ENCODE measurements at regions of chr1 and their contacts with region 1.

Region 1: GRCh38 chr1:161098210-161099068 is at the start of gene KLHDC9:
- DNase-seq: peak; percentile 53 to 98 (median 80)

Region 2: DNA sequence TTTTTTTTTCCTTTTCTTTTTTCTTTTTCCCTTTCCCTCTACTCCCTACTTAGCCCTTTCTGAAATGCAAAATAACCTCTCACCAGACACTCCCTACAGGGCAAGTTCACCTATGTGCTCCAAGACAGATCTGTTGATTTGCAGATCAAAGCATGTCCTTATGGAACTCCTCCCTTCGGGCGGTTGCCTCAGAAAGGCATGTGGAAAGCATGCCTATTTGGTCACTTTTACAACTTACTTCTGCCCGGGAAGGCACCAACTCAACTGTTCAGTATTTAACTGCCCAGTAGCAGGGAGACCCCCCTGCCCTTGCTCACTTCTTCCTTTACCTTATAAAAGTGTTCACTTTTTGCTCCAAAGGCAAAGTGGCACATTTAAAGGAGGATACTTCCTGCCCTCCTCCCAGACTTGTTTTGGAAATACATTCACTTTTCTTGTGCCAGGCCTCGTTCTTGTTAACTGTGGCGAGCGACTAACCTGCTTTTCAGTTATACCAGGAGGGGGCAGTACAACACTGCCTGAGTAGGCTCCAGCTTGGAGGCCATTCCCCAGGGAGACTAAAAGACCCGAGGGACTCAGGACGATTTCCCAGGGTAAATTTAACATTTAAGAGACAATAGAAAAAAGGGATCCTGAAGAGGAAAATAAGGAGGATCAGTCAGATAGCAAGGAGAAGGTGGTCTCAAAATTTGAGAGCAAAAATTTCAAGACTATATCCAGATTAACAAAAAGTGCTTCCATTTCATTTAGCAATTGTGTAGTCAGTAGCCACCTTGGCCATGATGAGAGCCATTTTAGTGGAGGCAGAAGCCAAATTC is 371.7 kb before region 1 on chr1:
- intact Hi-C with region 1: loop called (anchors 5 kb)
- DNase-seq: peak in 7 of 10 donors; percentile 12 to 90 (median 44)

Region 3: GRCh38 chr1:160997323-160998038 is 101.0 kb before region 1 on chr1:
- intact Hi-C with region 1: loop called (anchors 5 kb)
- DNase-seq: peak in 6 of 10 donors; percentile 37 to 92 (median 42)

Region 4: GRCh38 chr1:161045750-161046571 is 52.5 kb before region 1 on chr1 and contains the start of gene USF1:
- intact Hi-C with region 1: loop called (anchors 5 kb)
- DNase-seq: peak; percentile 88 to 99 (median 91)